AG04449 (cell line): ENCODE measurements at regions of chr11 and their contacts with region 1.

Region 1: DNA sequence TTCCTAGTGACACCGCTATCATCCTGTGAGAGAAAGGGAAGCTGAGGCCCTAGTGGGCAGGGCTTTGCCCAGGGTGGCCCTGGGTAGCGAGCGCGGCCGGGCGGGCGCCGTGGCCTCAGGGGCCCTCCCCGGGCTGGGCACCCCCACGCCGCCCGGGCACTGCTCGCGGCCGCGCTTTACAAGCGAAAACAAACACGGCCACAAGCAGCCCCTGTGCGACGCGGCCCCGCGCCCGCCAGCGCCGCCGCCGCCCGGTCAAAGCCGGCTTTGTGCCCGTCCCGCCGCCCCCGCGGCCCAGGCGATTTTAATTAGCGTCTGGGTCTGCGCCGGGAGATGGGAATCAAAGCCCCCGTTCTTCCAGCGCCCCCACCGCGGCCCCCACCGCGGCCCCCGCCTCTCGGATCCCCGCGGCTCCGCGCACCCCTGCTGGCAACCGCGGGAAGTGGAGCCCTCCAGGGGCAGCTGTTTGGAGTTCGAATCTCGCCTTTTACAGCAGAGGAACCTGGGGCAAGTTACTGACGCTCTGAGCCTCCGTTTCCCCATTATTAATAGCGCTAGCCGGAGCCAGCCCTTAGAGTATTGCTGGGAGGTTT is 47.9 kb downstream of the CHRDL2 start:
- DNase-seq: no peak
- H3K4me3 ChIP-seq: peak overlapping the region; percentile 25
- CTCF ChIP-seq: peak; percentile 59

Region 2: GRCh38 chr11:74570266-74571061 is 112.9 kb before region 1 on chr11:
- CTCF ChIA-PET with region 1: no interaction called
- POLR2A ChIA-PET with region 1: no interaction called
- DNase-seq: no peak
- H3K4me3 ChIP-seq: no peak overlapping the region
- CTCF ChIP-seq: peak; percentile 62

Region 3: GRCh38 chr11:74672956-74673692 is 10.3 kb before region 1 on chr11:
- CTCF ChIA-PET with region 1: interaction called, 17 read pairs
- POLR2A ChIA-PET with region 1: interaction called, 6 read pairs
- DNase-seq: peak; percentile 99
- H3K4me3 ChIP-seq: no peak overlapping the region; the same call in 1 of the 2 replicates
- CTCF ChIP-seq: no peak

Region 4: GRCh38 chr11:74696932-74697687 is 13.7 kb after region 1 on chr11:
- CTCF ChIA-PET with region 1: interaction called, 119 read pairs
- POLR2A ChIA-PET with region 1: interaction called, 3 read pairs
- DNase-seq: peak; percentile 89
- H3K4me3 ChIP-seq: peak overlapping the region; percentile 8; the same call in 1 of the 2 replicates
- CTCF ChIP-seq: no peak